Activated CD4-positive, alpha-beta memory T cell treated with anti-CD3 and anti-CD28 coated beads for 36 hours (primary cell): ENCODE measurements at regions of chr6 and their contacts with region 1.

Region 1: GRCh38 chr6:111837641-111838500 is 35.4 kb downstream of the FYN start:
- DNase-seq: peak; percentile 77
- H3K4me3 Mint-ChIP-seq: peak overlapping the region; percentile 54
- H3K27ac Mint-ChIP-seq: peak overlapping the region; percentile 91
- H3K4me1 Mint-ChIP-seq: peaks cover 37% of the 10 kb centered on the region
- H3K27me3 Mint-ChIP-seq: no peaks in the 10 kb centered on the region

Region 2: DNA sequence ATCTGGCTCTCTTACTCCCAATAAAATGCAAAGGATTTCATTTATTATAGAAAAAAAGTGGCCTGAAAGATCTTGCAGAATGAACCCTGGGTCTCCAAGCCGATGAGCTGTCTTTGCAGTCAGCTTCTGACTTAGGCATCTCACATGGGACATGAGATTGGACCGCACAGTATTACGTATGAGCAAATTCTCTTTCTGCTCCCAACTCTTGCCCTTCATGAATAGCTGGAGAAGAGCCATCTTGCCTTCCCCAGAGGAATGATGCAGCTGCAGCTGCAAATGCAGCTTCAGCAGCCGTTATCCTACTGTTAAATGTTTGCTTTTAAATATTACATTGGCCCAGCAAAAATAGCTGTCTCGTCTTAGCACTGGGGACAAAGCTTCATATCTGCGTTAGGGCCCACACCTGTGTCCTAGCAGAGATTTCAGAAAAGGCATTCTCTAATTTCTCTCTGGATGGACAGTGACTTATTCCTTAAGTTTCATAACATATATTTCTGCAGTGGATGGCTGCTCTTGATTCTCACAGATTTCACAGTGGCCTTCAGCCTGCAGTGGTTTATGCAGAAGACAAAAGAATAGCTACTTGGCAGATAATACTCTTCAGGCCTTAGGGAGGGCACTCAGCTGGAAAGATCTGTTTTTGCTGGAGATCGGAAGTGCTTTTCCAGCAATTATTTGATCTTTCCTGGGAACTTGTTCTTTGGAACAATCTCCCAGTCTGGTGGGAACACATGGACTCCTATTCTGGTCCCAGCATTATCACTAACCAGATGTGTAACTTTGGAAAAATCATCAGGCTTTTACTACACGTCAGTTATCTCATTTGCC is 93.8 kb before region 1 on chr6:
- CTCF ChIA-PET with region 1: no interaction called
- POLR2A ChIA-PET with region 1: no interaction called
- intact Hi-C with region 1: no loop called
- DNase-seq: no peak
- H3K4me3 Mint-ChIP-seq: no peak overlapping the region
- H3K27ac Mint-ChIP-seq: no peak overlapping the region
- H3K4me1 Mint-ChIP-seq: peaks cover 92% of the 10 kb centered on the region
- H3K27me3 Mint-ChIP-seq: no peaks in the 10 kb centered on the region

Region 3: GRCh38 chr6:111804627-111805235 is 33.1 kb before region 1 on chr6:
- CTCF ChIA-PET with region 1: interaction called, 6 read pairs
- POLR2A ChIA-PET with region 1: interaction called, 21 read pairs
- intact Hi-C with region 1: loop called (anchors 1 kb)
- DNase-seq: peak; percentile 86
- H3K4me3 Mint-ChIP-seq: peak overlapping the region; percentile 59
- H3K27ac Mint-ChIP-seq: peak overlapping the region; percentile 91
- H3K4me1 Mint-ChIP-seq: peaks cover 94% of the 10 kb centered on the region
- H3K27me3 Mint-ChIP-seq: no peaks in the 10 kb centered on the region

Region 4: DNA sequence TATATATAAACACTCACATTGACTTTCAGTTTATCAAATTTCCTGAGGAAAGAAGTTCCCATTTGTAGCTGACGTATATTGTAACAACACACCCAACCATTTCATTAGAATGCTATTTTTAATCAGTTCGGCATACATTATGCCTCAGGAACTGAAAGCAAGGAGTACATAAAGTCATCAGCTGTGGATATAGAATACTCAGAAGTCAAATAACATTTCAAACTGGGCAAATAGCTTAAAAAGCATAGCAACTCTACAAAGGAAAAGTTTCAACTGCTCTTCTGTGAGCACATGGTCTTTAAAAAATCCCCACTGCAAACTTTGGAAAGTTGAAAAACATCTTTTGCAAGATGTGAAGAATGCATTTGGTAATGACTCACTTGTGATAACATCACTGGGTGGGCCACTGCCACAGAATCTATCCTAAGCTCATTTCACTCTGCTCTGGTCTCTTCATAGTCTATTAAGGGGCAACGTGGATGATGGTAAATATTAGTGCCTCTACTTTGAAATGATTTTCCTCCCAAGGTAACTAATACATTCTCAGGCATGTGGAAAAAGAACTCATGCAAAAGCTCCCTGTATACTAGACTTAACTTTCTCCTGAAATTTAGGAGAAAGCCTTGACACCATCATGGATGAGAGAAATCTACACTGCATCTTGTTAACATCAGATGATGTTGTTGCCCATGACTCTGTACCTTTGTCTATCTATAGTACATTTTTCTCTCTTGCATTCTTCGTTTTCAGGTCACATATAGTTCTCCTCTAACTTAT is 13.9 kb before region 1 on chr6:
- CTCF ChIA-PET with region 1: interaction called, 7 read pairs
- POLR2A ChIA-PET with region 1: interaction called, 42 read pairs
- intact Hi-C with region 1: loop called (anchors 1 kb)
- DNase-seq: peak; percentile 44
- H3K4me3 Mint-ChIP-seq: peak overlapping the region; percentile 21
- H3K27ac Mint-ChIP-seq: peak overlapping the region; percentile 91
- H3K4me1 Mint-ChIP-seq: peaks cover 80% of the 10 kb centered on the region
- H3K27me3 Mint-ChIP-seq: no peaks in the 10 kb centered on the region

Region 5: DNA sequence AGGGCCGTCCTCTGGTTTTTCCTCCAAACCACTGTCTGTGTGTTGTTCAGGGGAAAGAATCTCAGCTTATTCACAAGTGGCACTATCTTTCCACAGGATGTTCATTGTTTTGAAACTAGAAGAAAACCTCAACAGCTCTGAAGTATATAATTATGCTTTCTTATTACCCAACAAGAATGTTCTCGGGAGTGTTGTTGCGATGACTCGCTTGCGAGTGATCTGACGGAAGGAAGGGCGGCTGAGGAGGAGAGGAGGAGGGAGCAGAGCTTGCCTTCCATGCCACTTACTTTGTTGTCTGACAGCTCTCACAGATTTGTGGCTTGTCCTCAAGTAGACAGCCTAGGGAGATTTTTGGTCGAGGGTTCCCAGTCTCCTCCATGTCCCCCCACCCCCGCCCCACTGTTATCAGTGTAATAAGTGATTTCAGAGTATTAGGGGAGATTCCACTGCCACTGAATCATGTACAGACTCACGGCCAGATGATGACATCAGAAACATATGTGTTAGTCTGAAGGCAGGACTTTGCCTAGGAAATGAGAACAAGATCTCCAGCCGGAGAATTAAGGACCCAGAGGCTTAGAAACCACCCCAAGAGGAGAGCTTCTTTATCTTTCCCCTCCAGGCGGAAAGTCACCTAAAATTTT is 135.4 kb after region 1 on chr6:
- CTCF ChIA-PET with region 1: no interaction called
- POLR2A ChIA-PET with region 1: interaction called, 3 read pairs
- intact Hi-C with region 1: loop called (anchors 1 kb)
- DNase-seq: peak; percentile 81
- H3K4me3 Mint-ChIP-seq: peak overlapping the region; percentile 59
- H3K27ac Mint-ChIP-seq: peak overlapping the region; percentile 89
- H3K4me1 Mint-ChIP-seq: peaks cover 63% of the 10 kb centered on the region
- H3K27me3 Mint-ChIP-seq: no peaks in the 10 kb centered on the region